Activated B cell treated with CpG ODN at 0.5 μM for 24 hours (primary cell): ENCODE measurements at regions of chr1 and their contacts with region 1.

Region 1: GRCh38 chr1:52636721-52637695 is 4.0 kb downstream of the SHISAL2A start:
- DNase-seq: peak; percentile 67
- ATAC-seq: peak; percentile 69
- H3K4me3 Mint-ChIP-seq: peak overlapping the region; percentile 81
- H3K27ac Mint-ChIP-seq: peak overlapping the region; percentile 99
- H3K4me1 Mint-ChIP-seq: peaks cover 90% of the 10 kb centered on the region
- H3K27me3 Mint-ChIP-seq: no peaks in the 10 kb centered on the region
- CTCF ChIP-seq: no peak

Region 2: GRCh38 chr1:51506537-51506936 is 1130.5 kb before region 1 on chr1:
- CTCF ChIA-PET with region 1: no interaction called
- POLR2A ChIA-PET with region 1: no interaction called
- intact Hi-C with region 1: loop called (anchors 10 kb)
- DNase-seq: no peak
- ATAC-seq: peak; percentile 22
- H3K4me3 Mint-ChIP-seq: peak overlapping the region; percentile 52
- H3K27ac Mint-ChIP-seq: peak overlapping the region; percentile 62
- H3K4me1 Mint-ChIP-seq: peaks cover 83% of the 10 kb centered on the region
- H3K27me3 Mint-ChIP-seq: no peaks in the 10 kb centered on the region
- CTCF ChIP-seq: no peak

Region 3: GRCh38 chr1:52534928-52535764 is 101.9 kb before region 1 on chr1:
- CTCF ChIA-PET with region 1: no interaction called
- POLR2A ChIA-PET with region 1: interaction called, 24 read pairs
- intact Hi-C with region 1: loop called (anchors 2 kb)
- DNase-seq: no peak
- ATAC-seq: no peak
- H3K4me3 Mint-ChIP-seq: no peak overlapping the region
- H3K27ac Mint-ChIP-seq: no peak overlapping the region
- H3K4me1 Mint-ChIP-seq: peaks cover 74% of the 10 kb centered on the region
- H3K27me3 Mint-ChIP-seq: no peaks in the 10 kb centered on the region
- CTCF ChIP-seq: no peak

Region 4: DNA sequence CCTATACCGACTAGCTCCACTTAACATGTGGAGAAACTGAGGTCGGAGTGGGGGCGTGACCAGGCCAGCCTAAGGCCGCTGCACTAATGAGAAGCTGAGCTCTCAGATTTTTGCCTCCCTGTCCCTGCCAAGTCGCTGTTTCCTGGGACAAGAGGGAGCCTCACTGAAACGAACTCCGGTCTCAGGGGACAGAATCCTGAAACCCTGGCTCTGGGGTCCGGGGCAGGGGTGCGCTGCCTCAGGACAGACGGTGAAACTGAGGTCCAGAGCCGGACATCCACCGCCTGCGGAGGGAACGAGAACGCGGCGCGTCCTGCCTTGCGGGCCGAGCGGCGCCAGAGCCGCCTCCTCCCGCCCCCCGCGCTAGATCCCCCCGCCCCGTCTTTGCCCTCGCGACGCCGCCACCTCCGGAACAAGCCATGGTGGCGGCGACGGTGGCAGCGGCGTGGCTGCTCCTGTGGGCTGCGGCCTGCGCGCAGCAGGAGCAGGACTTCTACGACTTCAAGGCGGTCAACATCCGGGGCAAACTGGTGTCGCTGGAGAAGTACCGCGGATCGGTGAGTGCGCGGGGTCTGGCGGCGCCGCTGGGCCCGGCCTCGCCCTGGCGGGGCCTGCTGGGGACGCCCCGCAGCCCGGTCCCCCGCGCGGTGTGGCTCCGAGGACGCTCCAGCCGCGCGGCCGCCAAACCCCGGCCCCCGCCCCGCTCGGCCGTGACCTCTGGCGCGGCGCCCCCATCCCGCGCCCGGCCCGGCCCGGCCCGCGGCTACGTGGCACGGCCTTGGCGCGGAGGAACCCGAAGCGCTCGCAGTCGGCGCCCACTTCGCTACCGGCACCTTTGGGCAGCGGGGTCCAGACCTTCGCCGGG is 34.8 kb before region 1 on chr1 and contains the start of gene GPX7:
- CTCF ChIA-PET with region 1: interaction called, 4 read pairs
- POLR2A ChIA-PET with region 1: interaction called, 45 read pairs
- intact Hi-C with region 1: loop called (anchors 1 kb)
- DNase-seq: peak; percentile 57
- ATAC-seq: peak; percentile 75
- H3K4me3 Mint-ChIP-seq: peak within 1 kb of the TSS; percentile 84
- H3K27ac Mint-ChIP-seq: peak within 1 kb of the TSS; percentile 84
- H3K4me1 Mint-ChIP-seq: peaks cover 55% of the 10 kb centered on the region
- H3K27me3 Mint-ChIP-seq: no peaks in the 10 kb centered on the region
- CTCF ChIP-seq: no peak
- total RNA-seq, gene GPX7: 20.9 and 22.4 TPM in 2 replicates

Region 5: DNA sequence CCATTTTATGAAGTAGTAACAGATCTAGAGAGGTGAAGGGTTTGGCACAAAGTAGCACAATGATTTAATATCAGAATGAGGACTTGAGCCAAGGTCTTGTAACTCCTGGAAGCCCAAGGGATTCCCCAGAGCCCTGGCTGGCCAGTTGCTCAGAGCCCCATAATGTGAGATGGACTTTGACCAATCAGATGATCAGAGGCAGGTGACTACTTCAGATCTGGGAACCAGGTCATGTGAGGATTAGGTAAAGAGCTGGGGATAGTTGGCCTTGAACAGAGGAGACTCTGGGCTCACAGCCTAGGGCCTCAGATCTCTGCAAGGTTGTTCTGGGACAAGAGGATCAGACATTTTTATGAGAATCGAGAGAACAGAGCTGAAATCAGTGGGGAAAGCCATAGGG is 14.9 kb after region 1 on chr1:
- CTCF ChIA-PET with region 1: interaction called, 3 read pairs
- POLR2A ChIA-PET with region 1: interaction called, 13 read pairs
- intact Hi-C with region 1: no loop called
- DNase-seq: no peak
- ATAC-seq: no peak
- H3K4me3 Mint-ChIP-seq: no peak overlapping the region
- H3K27ac Mint-ChIP-seq: peak overlapping the region; percentile 71
- H3K4me1 Mint-ChIP-seq: peaks cover 25% of the 10 kb centered on the region
- H3K27me3 Mint-ChIP-seq: no peaks in the 10 kb centered on the region
- CTCF ChIP-seq: no peak

Region 6: GRCh38 chr1:52669696-52670095 is 32.7 kb after region 1 on chr1:
- CTCF ChIA-PET with region 1: interaction called, 23 read pairs
- POLR2A ChIA-PET with region 1: interaction called, 17 read pairs
- intact Hi-C with region 1: loop called (anchors 1 kb)
- DNase-seq: no peak
- ATAC-seq: no peak
- H3K4me3 Mint-ChIP-seq: no peak overlapping the region
- H3K27ac Mint-ChIP-seq: peak overlapping the region; percentile 22
- H3K4me1 Mint-ChIP-seq: peaks cover 16% of the 10 kb centered on the region
- H3K27me3 Mint-ChIP-seq: no peaks in the 10 kb centered on the region
- CTCF ChIP-seq: no peak

Region 7: DNA sequence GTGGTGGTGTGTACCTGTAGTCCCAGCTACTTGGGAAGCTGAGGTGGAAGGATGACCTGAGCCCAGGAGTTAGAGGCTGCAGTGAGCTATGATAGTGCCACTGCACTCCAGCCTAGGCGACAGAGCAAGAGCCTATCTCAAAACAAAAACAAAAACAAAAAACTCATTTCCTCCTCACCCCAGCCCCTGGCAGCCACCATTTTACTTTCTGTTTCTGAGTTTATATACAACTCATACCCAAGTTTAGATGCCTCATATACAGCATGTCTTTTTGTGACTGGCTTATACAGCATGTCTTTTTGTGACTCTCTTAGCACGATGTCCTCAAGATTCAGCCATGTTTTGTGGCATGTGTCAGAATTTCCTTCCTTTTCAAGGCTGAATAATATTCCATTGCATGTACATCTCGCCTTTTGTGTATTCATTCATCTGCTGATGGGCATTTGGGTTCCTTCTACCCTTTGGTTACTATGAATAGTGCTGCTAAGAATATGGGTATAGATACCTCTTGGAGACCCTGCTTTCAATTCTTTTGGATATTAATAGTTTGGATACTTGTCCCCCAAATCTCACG is 46.4 kb after region 1 on chr1:
- CTCF ChIA-PET with region 1: interaction called, 11 read pairs
- POLR2A ChIA-PET with region 1: interaction called, 26 read pairs
- intact Hi-C with region 1: loop called (anchors 1 kb)
- DNase-seq: no peak
- ATAC-seq: no peak
- H3K4me3 Mint-ChIP-seq: no peak overlapping the region
- H3K27ac Mint-ChIP-seq: no peak overlapping the region
- H3K4me1 Mint-ChIP-seq: peaks cover 44% of the 10 kb centered on the region
- H3K27me3 Mint-ChIP-seq: no peaks in the 10 kb centered on the region
- CTCF ChIP-seq: no peak

Region 8: GRCh38 chr1:52834798-52835197 is 197.8 kb after region 1 on chr1:
- CTCF ChIA-PET with region 1: no interaction called
- POLR2A ChIA-PET with region 1: no interaction called
- intact Hi-C with region 1: no loop called
- DNase-seq: no peak
- ATAC-seq: no peak
- H3K4me3 Mint-ChIP-seq: no peak overlapping the region
- H3K27ac Mint-ChIP-seq: no peak overlapping the region
- H3K4me1 Mint-ChIP-seq: no peaks in the 10 kb centered on the region
- H3K27me3 Mint-ChIP-seq: peaks cover 8% of the 10 kb centered on the region
- CTCF ChIP-seq: no peak